Activated CD8-positive, alpha-beta T cell treated with anti-CD3 and anti-CD28 coated beads, Interleukin-2, amount 10 ng/mL, durations not matched to agents 7 days and 5 days (primary cell): ENCODE measurements at regions of chr1 and their contacts with region 1.

Region 1: GRCh38 chr1:212070720-212071302 is 35.3 kb downstream of the DTL start:
- DNase-seq: no peak
- ATAC-seq: peak; percentile 63
- H3K4me3 Mint-ChIP-seq: no peak overlapping the region
- H3K27ac Mint-ChIP-seq: no peak overlapping the region
- H3K4me1 Mint-ChIP-seq: no peaks in the 10 kb centered on the region
- H3K27me3 Mint-ChIP-seq: no peaks in the 10 kb centered on the region

Region 2: GRCh38 chr1:211951856-211952255 is 119.0 kb before region 1 on chr1:
- CTCF ChIA-PET with region 1: no interaction called
- POLR2A ChIA-PET with region 1: no interaction called
- DNase-seq: peak; percentile 34
- ATAC-seq: peak; percentile 86
- H3K4me3 Mint-ChIP-seq: no peak overlapping the region
- H3K27ac Mint-ChIP-seq: peak overlapping the region; percentile 40
- H3K4me1 Mint-ChIP-seq: peaks cover 3% of the 10 kb centered on the region
- H3K27me3 Mint-ChIP-seq: no peaks in the 10 kb centered on the region

Region 3: DNA sequence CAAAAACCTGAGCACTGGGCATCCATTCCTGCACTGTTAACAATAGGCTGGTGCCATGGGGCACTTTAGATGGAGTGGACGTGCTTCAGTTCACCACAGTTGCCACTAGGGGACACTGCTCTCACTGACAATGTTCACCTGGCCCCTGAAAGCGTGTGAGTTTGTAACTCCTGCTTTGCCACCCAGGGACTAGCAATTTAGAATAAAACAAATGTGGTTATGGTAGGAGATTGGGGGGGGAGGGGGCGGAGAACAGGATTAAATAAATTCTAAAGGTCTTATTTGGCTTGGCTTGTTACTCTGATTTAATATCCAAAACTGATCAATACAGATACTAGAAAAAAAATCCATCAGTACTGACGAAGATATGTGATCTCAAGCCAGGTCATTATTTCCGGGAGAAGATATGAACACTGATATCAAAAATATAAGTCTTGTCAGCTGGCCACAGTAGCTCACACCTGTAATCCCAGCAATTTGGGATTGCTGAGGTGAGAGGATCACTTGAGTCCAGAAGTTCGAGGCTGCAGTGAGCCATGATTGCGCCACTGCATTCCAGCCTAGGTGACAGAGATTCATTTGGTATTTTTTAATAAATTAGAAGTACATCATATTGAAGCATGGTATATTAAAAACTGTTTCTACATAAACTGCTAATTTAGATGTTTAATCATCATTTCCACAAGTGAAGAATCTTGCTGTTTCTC is 58.6 kb before region 1 on chr1:
- CTCF ChIA-PET with region 1: no interaction called
- POLR2A ChIA-PET with region 1: no interaction called
- DNase-seq: peak; percentile 77
- ATAC-seq: peak; percentile 99
- H3K4me3 Mint-ChIP-seq: no peak overlapping the region
- H3K27ac Mint-ChIP-seq: no peak overlapping the region
- H3K4me1 Mint-ChIP-seq: no peaks in the 10 kb centered on the region
- H3K27me3 Mint-ChIP-seq: no peaks in the 10 kb centered on the region

Region 4: DNA sequence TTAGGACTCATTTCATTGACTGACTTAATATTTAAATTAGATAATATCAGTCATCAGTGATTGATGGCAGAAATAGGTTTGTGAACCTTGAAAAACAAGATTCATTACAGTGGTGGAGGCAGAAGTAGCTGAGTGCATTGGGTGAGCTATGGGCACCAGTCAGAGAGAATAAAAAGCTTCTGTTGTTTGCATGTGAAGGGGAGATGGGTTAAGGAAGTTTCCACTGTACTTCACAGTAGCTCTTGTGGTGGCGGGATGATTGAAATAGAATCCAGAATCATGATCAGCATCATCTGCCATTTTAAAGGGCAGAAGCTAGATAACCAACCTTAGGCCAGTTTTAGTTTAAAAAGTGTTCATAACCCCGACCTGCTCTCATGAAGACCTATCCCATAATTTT is 30.9 kb after region 1 on chr1:
- CTCF ChIA-PET with region 1: interaction called, 10 read pairs
- POLR2A ChIA-PET with region 1: no interaction called
- DNase-seq: no peak
- ATAC-seq: no peak
- H3K4me3 Mint-ChIP-seq: no peak overlapping the region
- H3K27ac Mint-ChIP-seq: no peak overlapping the region
- H3K4me1 Mint-ChIP-seq: peaks cover 6% of the 10 kb centered on the region
- H3K27me3 Mint-ChIP-seq: no peaks in the 10 kb centered on the region

Region 5: GRCh38 chr1:212284744-212285684 is 214.2 kb after region 1 on chr1 and contains the start of gene PPP2R5A:
- CTCF ChIA-PET with region 1: interaction called, 45 read pairs
- POLR2A ChIA-PET with region 1: interaction called, 5 read pairs
- DNase-seq: peak; percentile 99
- ATAC-seq: peak; percentile 94
- H3K4me3 Mint-ChIP-seq: peak within 1 kb of the TSS; percentile 99
- H3K27ac Mint-ChIP-seq: peak within 1 kb of the TSS; percentile 99
- H3K4me1 Mint-ChIP-seq: peaks cover 37% of the 10 kb centered on the region
- H3K27me3 Mint-ChIP-seq: no peaks in the 10 kb centered on the region
- total RNA-seq, gene PPP2R5A: 66.7 to 72.3 TPM

Region 6: GRCh38 chr1:212291505-212292134 is 220.8 kb after region 1 on chr1:
- CTCF ChIA-PET with region 1: interaction called, 45 read pairs
- POLR2A ChIA-PET with region 1: no interaction called
- DNase-seq: peak; percentile 37
- ATAC-seq: peak; percentile 77
- H3K4me3 Mint-ChIP-seq: no peak overlapping the region
- H3K27ac Mint-ChIP-seq: no peak overlapping the region
- H3K4me1 Mint-ChIP-seq: peaks cover 69% of the 10 kb centered on the region
- H3K27me3 Mint-ChIP-seq: no peaks in the 10 kb centered on the region

Region 7: GRCh38 chr1:212344905-212345304 is 274.1 kb after region 1 on chr1:
- CTCF ChIA-PET with region 1: interaction called, 11 read pairs
- POLR2A ChIA-PET with region 1: no interaction called
- DNase-seq: no peak
- ATAC-seq: no peak
- H3K4me3 Mint-ChIP-seq: no peak overlapping the region
- H3K27ac Mint-ChIP-seq: no peak overlapping the region
- H3K4me1 Mint-ChIP-seq: no peaks in the 10 kb centered on the region
- H3K27me3 Mint-ChIP-seq: no peaks in the 10 kb centered on the region

Region 8: GRCh38 chr1:212355230-212355969 is 284.6 kb after region 1 on chr1:
- CTCF ChIA-PET with region 1: interaction called, 18 read pairs
- POLR2A ChIA-PET with region 1: no interaction called
- DNase-seq: no peak
- ATAC-seq: no peak
- H3K4me3 Mint-ChIP-seq: no peak overlapping the region
- H3K27ac Mint-ChIP-seq: no peak overlapping the region
- H3K4me1 Mint-ChIP-seq: peaks cover 14% of the 10 kb centered on the region
- H3K27me3 Mint-ChIP-seq: no peaks in the 10 kb centered on the region

Region 9: GRCh38 chr1:212368073-212368484 is 297.3 kb after region 1 on chr1:
- CTCF ChIA-PET with region 1: interaction called, 54 read pairs
- POLR2A ChIA-PET with region 1: no interaction called
- DNase-seq: peak; percentile 76
- ATAC-seq: peak; percentile 92
- H3K4me3 Mint-ChIP-seq: no peak overlapping the region
- H3K27ac Mint-ChIP-seq: no peak overlapping the region
- H3K4me1 Mint-ChIP-seq: no peaks in the 10 kb centered on the region
- H3K27me3 Mint-ChIP-seq: no peaks in the 10 kb centered on the region